Breast epithelium (tissue), 4 donors: ENCODE measurements at regions of chr12 and their contacts with region 1.

Region 1: DNA sequence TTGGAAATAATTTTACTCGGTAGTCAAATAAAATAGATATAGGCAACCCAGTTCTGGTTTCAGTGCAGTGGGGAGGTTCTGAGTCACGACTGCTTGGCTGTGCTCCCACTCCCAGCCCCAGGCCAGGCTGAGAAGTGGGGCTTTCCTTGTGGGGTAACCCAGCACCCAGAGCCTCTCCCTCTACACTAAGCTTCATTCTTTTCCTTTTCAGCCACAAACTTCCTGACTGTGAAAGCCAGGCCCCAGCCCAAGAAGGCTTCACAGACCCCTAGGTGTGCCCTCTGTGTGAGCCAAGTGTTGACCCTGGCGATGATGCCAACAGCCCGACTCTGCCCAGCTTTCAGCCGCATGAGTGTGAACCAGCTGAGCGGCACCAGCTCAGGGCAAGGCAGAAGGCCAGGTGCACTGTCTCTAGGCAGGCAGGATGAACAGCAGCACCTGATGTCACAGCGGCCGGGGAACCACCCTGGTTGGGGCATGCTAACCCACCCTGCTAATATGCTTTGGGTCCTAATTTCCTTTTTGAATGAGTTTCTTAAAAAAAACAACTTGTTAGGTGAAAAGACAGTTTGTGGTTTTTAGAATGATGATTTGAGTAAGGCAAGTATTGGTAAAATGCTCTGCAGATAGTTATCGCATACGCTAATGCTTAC is 42.2 kb upstream of the ATP23 start:
- DNase-seq: peak; percentile 62 to 65
- H3K4me3 ChIP-seq: no peak overlapping the region
- H3K27ac ChIP-seq: peak overlapping the region; percentile 76 to 94
- H3K4me1 ChIP-seq: peaks cover 17 to 38% of the 10 kb centered on the region in 2 donors
- H3K27me3 ChIP-seq: no peaks in the 10 kb centered on the region
- CTCF ChIP-seq: no peak
- POLR2A ChIP-seq: no peak

Region 2: DNA sequence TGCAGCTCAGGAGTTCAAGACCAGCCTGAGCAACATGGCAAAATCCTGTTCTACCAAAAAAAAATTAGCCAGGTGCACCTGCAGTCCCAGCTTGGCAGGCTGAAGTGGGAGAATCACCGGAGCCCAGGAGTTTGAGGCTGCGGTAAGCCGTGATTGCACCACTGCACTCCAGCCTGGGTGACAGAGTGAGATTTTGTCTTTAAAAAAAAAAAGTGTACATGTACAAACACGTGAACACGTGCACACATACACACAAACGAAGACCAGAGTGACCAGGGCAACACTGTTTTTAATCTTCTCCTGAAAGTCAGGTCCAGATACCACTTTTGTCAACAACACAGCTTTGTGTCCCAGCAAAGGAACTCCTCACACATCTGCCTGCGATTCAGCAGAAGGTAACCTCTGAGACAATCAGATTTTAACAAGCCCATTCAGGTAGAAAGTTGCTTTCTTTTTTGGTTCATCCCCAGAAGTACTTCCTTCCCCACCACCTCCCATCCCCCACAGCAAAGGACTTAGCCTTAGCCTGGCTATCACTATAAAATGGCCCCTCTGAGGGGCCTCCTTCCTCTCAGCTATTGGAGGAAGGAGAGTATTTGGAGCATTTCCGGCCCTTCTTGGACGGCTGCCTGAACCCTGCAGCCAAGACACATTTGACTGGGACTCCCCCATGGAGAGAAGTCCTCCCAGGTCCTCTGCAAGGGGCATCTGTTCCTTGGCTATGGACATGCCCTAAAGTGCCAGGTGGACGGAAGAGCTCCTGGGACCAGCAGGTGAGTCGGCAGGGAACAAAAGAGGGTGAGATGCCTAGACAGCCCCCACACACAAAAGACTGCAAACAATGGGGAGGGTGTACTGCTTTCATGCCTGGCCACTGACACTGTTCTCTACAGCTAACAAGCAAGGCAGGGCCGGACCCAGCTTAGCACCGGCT is 62.4 kb before region 1 on chr12:
- intact Hi-C with region 1: loop called (anchors 5 kb)
- DNase-seq: peak; percentile 53 to 59
- H3K4me3 ChIP-seq: peak overlapping the region; percentile 7 to 80 (median 14)
- H3K27ac ChIP-seq: peak overlapping the region; percentile 62 to 71
- H3K4me1 ChIP-seq: peaks cover 31 to 81% of the 10 kb centered on the region in 2 donors
- H3K27me3 ChIP-seq: no peaks in the 10 kb centered on the region
- CTCF ChIP-seq: no peak
- POLR2A ChIP-seq: no peak